Activated T-helper 1 cell treated with anti-CD3 and anti-CD28 coated beads, Interleukin-12 subunit alpha, Interleukin-12 subunit beta, Interleukin-2, Interleukin-4 antibody, amounts not matched to agents 30 ng/mL and 10 ng/mL and 1 ng/mL, durations not matched to agents 14 hours and 24 hours and 36 hours (primary cell): ENCODE measurements at regions of chr2 and their contacts with region 1.

Region 1: DNA sequence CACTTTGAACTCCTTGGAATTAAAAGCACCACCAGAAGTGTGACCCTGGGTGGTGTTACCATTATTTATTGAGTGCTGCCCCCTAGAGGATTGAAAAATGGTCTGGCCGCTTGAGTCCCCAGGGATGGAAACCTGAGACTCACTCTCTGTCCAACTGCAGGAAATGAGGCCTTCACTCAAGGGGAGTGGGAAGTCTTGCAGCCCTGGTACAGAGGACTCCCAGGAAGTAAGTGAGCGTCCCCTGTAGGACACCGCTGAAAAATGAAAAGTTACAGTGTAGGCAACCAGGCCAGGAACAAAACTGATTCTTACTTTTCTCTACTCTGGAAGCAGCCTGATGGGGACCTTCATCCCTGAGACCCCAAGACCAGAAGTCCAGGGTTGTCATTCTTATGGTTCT is 2.2 kb upstream of the NRP2 start:
- DNase-seq: peak; percentile 44
- H3K4me3 Mint-ChIP-seq: peak overlapping the region; percentile 43
- H3K27ac Mint-ChIP-seq: peak overlapping the region; percentile 22
- H3K4me1 Mint-ChIP-seq: peaks cover 45% of the 10 kb centered on the region
- H3K27me3 Mint-ChIP-seq: peaks cover 39% of the 10 kb centered on the region

Region 2: DNA sequence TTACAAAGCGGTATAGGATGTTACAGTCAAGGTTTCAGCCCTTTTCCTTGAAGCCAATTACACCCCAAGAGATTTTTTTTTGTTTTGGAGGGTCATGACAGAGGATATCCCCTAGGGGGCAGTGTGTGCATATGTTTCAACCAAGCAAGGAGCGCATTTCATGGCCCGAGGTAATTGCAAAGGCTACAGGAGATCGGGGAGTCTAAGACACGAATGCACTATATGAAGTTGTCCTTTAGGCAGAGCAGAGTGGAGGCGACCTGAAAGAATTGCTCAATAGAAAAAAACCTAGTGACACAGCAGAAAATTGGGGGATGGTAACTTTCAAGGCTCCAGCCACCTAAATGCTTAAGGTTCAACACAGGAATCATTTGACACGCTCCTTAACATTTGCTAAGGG is 1354.6 kb before region 1 on chr2:
- intact Hi-C with region 1: loop called (anchors 1 kb)
- DNase-seq: peak; percentile 55
- H3K4me3 Mint-ChIP-seq: no peak overlapping the region
- H3K27ac Mint-ChIP-seq: no peak overlapping the region
- H3K4me1 Mint-ChIP-seq: peaks cover 5% of the 10 kb centered on the region
- H3K27me3 Mint-ChIP-seq: peaks cover 14% of the 10 kb centered on the region

Region 3: DNA sequence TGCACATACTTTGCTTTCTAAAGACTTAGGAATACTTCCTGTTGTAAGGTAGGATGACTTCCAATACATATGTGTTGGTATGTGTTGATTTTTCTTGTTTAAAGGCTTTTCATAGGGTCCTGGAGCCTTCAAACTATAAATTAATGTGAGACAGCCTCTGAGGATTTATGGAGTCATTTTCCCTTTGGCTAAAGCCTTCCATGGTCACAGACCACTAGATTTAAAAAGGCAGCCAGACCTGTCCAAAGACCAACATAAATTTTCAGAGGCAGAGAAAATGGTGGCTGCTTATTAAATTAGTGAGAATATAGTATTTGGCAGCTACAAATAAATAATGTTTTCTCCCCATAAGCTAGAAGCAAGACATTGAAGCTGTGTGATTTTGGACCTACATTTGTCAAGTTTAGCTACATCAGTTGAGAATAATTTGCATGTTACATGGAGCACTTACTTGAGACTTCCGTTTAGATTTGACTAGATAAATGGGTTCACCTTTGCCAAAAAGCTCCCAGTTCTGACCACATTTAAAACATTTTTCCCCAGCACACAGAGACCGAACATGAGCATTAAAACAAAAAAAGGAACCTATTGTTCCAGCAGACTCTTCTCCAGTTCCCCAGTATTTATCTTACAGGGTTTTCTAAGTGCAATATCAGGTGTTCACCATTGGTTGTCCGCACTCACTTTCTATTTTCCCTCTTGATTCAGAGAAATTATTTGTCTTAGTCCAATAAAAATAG is 731.9 kb before region 1 on chr2:
- intact Hi-C with region 1: loop called (anchors 5 kb)
- DNase-seq: no peak
- H3K4me3 Mint-ChIP-seq: peak overlapping the region; percentile 50
- H3K27ac Mint-ChIP-seq: peak overlapping the region; percentile 73
- H3K4me1 Mint-ChIP-seq: peaks cover 69% of the 10 kb centered on the region
- H3K27me3 Mint-ChIP-seq: no peaks in the 10 kb centered on the region

Region 4: GRCh38 chr2:205323929-205324328 is 356.1 kb before region 1 on chr2:
- intact Hi-C with region 1: loop called (anchors 2 kb)
- DNase-seq: no peak
- H3K4me3 Mint-ChIP-seq: no peak overlapping the region
- H3K27ac Mint-ChIP-seq: no peak overlapping the region
- H3K4me1 Mint-ChIP-seq: no peaks in the 10 kb centered on the region
- H3K27me3 Mint-ChIP-seq: peaks cover 5% of the 10 kb centered on the region

Region 5: GRCh38 chr2:205596581-205596980 is 83.5 kb before region 1 on chr2:
- intact Hi-C with region 1: loop called (anchors 2 kb)
- DNase-seq: no peak
- H3K4me3 Mint-ChIP-seq: no peak overlapping the region
- H3K27ac Mint-ChIP-seq: no peak overlapping the region
- H3K4me1 Mint-ChIP-seq: no peaks in the 10 kb centered on the region
- H3K27me3 Mint-ChIP-seq: peaks cover 17% of the 10 kb centered on the region

Region 6: GRCh38 chr2:205706769-205707381 is 26.8 kb after region 1 on chr2:
- intact Hi-C with region 1: loop called (anchors 2 kb)
- DNase-seq: peak; percentile 35
- H3K4me3 Mint-ChIP-seq: peak overlapping the region; percentile 46
- H3K27ac Mint-ChIP-seq: peak overlapping the region; percentile 97
- H3K4me1 Mint-ChIP-seq: peaks cover 50% of the 10 kb centered on the region
- H3K27me3 Mint-ChIP-seq: no peaks in the 10 kb centered on the region

Region 7: GRCh38 chr2:207143215-207144172 is 1463.4 kb after region 1 on chr2:
- intact Hi-C with region 1: no loop called
- DNase-seq: peak; percentile 46
- H3K4me3 Mint-ChIP-seq: peak overlapping the region; percentile 61
- H3K27ac Mint-ChIP-seq: peak overlapping the region; percentile 90
- H3K4me1 Mint-ChIP-seq: peaks cover 59% of the 10 kb centered on the region
- H3K27me3 Mint-ChIP-seq: peaks cover 6% of the 10 kb centered on the region